Activated T-helper 2 cell treated with anti-CD3 and anti-CD28 coated beads, Interferon-gamma antibody, Interleukin-2, Interleukin-4, amounts not matched to agents 10 μg/mL and 5 μg/mL and 100 μg/mL, durations not matched to agents 14 hours and 24 hours and 36 hours (primary cell): ENCODE measurements at regions of chr22 and their contacts with region 1.

Region 1: GRCh38 chr22:32144496-32145274 is 14.4 kb downstream of the C22orf42 start:
- DNase-seq: no peak
- H3K4me3 Mint-ChIP-seq: no peak overlapping the region
- H3K27ac Mint-ChIP-seq: no peak overlapping the region
- H3K4me1 Mint-ChIP-seq: peaks cover 40% of the 10 kb centered on the region
- H3K27me3 Mint-ChIP-seq: peaks cover 3% of the 10 kb centered on the region

Region 2: DNA sequence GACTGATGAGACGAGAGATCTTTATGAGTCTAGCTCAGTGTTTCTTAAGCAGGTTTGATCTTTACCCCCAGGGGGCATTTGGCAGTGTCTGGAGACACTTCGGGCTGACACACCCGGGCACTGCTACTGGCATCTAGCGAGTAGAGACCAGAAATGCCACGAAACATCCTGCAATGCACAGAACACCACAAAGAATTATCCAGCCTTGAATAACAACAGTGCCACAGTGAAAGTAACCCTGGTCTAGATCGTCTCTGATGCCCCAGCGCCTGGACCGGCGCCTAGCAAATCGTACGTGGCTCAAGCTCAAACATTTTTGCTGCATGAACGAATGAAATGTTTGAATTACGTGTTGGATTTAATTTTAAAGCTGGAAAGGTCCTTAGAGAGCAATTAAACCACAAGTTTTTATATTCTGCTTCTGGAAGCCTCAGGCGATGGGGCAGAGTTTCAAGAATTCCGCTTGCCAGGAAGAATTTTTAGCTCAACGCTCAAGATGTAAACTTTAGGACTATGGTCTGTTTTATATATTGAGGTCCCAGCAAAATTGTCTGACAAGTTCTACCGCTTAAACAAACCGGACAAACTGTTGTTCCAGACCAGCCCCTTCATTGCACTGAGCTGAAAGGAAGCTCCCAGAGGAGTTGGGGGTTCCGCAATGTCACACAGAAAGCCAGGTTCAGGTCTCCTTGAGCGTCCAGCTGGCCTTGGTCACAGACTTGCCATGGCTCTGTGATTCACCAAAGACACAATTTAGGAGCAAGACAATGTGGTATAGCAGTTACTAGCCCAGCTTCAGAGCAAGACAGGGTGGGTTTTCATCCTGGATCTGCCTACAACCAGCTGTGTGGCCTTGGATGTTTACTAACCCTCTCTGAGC is 1107.8 kb before region 1 on chr22:
- intact Hi-C with region 1: no loop called
- DNase-seq: no peak
- H3K4me3 Mint-ChIP-seq: no peak overlapping the region
- H3K27ac Mint-ChIP-seq: no peak overlapping the region
- H3K4me1 Mint-ChIP-seq: no peaks in the 10 kb centered on the region
- H3K27me3 Mint-ChIP-seq: peaks cover 6% of the 10 kb centered on the region

Region 3: GRCh38 chr22:32202539-32203180 is 58.0 kb after region 1 on chr22:
- intact Hi-C with region 1: loop called (anchors 5 kb)
- DNase-seq: no peak
- H3K4me3 Mint-ChIP-seq: peak overlapping the region; percentile 26
- H3K27ac Mint-ChIP-seq: no peak overlapping the region
- H3K4me1 Mint-ChIP-seq: peaks cover 17% of the 10 kb centered on the region
- H3K27me3 Mint-ChIP-seq: peaks cover 13% of the 10 kb centered on the region